Heart right ventricle (tissue), 16 donors: ENCODE measurements at regions of chr16 and their contacts with region 1.

Region 1: DNA sequence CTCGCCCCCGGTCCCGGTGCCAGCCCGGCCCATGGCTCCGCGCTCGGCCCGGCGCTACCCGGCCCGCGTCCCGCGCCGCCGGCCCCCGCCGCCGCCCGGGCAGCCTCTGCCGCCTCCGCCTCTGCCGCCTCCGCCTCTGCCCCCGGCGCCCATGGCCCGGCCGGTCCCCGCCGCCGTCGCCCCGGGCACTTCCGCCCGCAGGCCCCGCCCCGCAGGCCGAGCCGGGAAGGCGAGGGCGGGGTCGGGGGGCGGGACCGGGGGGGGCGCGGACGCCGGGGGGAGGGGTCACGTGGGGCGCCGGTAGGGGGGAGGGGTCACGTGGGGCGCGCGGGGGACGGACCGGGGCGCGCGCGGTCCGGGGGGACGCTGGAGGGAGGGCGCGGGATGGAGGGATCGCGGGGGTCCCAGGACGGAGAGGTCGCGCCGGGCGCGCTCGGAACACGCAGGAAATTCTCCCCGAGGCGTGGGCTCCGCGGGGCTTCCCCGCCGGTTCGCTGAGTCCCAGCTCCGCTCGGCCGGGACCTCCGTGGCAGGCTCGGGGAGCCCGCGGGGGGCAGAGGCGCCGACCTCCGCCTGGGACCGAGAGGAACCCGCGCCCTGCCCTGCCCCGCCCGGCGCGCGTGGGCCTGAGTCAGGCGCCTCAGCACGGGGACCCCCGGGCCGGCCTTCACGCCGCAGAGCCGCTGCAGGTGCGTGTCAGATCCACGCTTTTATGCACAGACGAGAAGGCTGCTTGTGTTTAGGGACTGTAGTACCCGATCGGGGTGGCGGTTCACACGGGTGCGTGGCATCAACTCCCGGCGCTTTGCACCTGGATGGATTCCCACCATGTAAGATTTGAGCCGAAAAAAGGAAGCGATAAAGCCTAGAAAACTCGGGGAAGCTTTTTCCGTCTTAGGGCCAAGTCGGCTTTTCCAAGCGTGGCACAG is at the start of gene PGAP6:
- DNase-seq: peak; percentile 60 to 73
- ATAC-seq: peak; percentile 45 to 87 (median 67)
- H3K4me3 ChIP-seq: peak within 1 kb of the TSS; percentile 85 to 99 (median 91)
- H3K27ac ChIP-seq: peak within 1 kb of the TSS; percentile 35 to 90 (median 82)
- H3K4me1 ChIP-seq: peaks cover 0 to 56% (median 35%) of the 10 kb centered on the region in 9 donors
- H3K27me3 ChIP-seq: no peaks in the 10 kb centered on the region
- CTCF ChIP-seq: no peak
- total RNA-seq, gene PGAP6: 27.1 to 57.3 (median 33.1) TPM

Region 2: DNA sequence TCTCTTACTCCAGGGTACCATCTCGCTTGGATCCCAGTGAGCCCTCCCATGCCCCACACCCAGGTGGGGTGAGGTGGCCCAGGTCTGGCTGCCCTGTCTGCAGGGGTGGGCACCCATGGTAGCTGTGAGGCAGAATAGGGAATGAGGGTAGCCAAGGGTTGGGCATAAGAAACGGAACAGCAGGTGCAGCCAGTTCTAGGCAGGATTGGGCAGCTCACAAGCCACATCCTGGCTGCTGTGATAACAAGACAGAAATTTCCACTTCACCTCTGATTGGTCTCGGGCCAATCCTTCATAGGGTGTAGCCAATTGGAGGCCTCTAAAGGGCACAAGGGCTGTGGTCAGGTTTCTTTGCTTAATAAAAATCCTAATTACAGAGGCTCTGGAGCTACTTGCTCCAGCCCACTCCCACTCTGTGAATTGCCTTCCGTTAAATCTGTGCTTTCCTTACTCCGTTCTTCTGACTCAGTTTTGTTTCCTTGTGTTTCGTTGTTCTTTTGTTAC is 103.1 kb before region 1 on chr16:
- intact Hi-C with region 1: no loop called
- DNase-seq: peak in 1 of 2 donors; percentile 50
- ATAC-seq: peak; percentile 11 to 67 (median 54)
- H3K4me3 ChIP-seq: no peak overlapping the region
- H3K27ac ChIP-seq: no peak overlapping the region
- H3K4me1 ChIP-seq: peaks cover 0 to 38% (median 22%) of the 10 kb centered on the region in 9 donors
- H3K27me3 ChIP-seq: peaks cover 0 to 66% (median 20%) of the 10 kb centered on the region in 7 donors
- CTCF ChIP-seq: no peak

Region 3: DNA sequence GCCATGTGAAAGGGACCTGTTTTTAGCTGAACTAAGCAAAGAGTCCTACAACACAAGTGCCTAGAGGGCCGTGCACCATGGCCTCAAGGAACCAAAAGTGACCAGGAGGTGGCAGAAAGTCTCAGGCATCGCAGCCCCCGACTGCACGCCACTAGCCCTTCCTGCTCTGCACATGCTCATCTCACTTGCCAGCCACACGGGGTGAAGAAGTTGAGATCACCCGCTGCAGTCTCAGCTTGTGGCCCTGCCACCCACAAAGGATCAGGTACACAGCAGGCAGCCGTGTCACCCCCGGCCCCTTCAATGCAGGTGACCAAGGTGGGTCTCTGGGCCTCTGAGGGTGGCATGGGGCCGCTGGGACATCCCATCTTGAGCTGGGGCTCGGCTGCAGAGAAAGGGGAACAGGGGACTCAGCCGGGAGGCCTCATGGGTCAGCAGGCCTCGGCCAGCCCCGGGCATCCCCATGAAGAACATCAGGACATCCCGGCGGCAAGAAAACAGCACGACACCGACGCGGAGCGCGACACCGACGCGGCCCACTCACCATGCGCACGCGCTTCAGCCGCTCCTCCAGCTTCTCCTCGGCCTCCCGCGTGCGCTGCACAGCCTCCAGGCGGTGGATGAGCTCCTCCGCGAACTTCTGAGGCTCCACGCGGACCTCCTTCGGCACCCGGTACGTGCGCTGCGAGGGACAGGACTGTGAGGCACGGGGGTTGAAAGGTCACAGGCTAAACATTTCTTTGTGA is 78.1 kb before region 1 on chr16:
- intact Hi-C with region 1: no loop called
- DNase-seq: no peak
- ATAC-seq: peak in 2 of 8 donors; percentile 40 to 50
- H3K4me3 ChIP-seq: no peak overlapping the region
- H3K27ac ChIP-seq: no peak overlapping the region
- H3K4me1 ChIP-seq: no peaks in the 10 kb centered on the region
- H3K27me3 ChIP-seq: no peaks in the 10 kb centered on the region
- CTCF ChIP-seq: peak in 3 of 9 donors; percentile 16 to 24 (median 17)

Region 4: DNA sequence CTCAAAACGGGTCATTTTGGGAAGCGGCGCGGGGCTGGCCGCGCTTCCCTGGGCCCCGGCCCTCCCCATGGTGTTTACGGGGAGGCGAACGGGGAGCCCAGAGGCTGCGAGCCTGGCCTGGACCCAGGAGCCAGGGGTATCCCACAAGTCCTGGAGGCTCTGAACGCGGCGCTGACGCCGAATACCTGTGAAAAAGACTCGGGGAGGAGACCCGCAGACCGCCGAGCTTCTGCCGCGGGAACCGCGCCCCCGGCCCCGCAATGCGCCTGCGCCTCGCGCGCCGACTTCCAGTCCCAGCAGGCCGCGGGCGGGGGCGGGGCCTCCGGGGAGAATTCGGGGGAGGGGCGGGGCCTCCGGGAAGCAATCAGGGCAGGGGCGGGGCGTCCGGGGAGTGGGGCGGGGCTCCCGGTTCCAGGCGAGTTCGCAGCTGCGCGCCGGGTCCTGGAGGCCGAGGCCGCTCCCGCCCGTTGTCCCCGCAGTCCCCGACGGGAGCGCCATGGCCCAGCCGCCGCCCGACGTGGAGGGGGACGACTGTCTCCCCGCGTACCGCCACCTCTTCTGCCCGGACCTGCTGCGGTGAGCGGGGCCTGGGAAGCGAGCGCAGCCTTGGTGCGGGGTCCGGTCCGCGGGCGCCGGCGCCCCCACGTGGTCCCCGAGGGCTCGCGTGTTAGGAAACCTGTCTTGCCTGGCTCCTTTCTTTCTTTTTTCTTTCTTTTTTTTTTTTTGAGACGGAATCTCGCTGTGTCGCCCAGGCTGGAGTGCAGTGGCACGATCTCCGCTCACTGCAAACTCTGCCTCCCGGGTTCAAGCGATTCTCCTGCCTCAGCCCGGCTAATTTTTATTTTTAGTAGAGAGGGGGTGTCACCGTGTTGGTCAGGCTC is 19.7 kb after region 1 on chr16 and contains the start of gene DECR2:
- intact Hi-C with region 1: loop called in 1 of 10 experiments (anchors 2 kb)
- DNase-seq: peak; percentile 96 to 98
- ATAC-seq: peak; percentile 89 to 93 (median 91)
- H3K4me3 ChIP-seq: peak within 1 kb of the TSS; percentile 53 to 97 (median 84)
- H3K27ac ChIP-seq: peak within 1 kb of the TSS; percentile 51 to 97 (median 92)
- H3K4me1 ChIP-seq: peaks cover under 1 to 33% (median 21%) of the 10 kb centered on the region in 9 donors
- H3K27me3 ChIP-seq: no peaks in the 10 kb centered on the region
- CTCF ChIP-seq: peak in 8 of 9 donors; percentile 24 to 83 (median 58)
- total RNA-seq, gene DECR2: 7.0 to 17.4 (median 11.6) TPM